Posterior cingulate gyrus (tissue), 11 donors: ENCODE measurements at regions of chr2 and their contacts with region 1.

Region 1: DNA sequence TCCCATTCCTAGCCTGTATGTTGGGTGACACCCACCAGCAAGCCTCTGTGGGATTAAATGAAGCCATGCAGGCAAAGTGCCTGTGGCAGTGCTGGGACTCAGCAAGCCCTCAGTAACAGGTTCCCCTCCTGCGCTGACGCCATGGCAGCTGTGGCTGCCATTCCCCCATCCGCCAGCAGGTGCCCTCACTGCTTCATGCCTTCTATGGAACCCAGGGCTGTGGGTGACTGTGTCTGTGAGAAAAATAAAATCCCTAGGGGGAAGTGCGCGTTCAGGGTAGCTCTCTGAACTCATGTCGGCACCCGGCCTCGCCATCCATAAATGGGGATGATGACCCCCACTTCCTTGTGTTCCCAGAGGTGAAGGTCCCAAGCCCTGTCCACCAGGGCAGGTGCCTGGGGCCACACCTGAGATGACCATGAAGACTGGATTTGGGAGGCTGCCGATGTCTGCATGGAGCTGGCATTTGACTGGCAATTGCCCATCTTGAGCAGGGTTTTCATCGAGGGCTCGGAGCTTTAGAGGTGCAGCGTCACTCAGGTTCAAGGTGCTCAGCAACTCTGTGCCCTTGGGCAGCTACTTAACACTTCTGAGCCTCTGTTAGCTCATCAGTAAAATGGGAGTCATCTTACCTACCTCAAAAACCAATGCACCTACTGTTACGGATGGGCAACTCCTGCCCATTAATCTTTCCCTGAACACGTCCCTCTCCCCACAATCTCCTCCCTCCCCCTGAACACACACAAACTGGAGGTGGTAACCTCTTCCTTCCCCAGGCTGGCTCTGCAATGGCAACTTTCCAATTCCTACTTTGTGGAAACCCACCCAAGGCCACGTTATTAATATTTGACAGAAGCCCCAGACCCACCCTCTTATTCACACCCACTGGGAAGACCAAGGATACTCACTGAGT is 2.9 kb upstream of the MAL start:
- DNase-seq: peak; percentile 81 to 97 (median 88)

Region 2: DNA sequence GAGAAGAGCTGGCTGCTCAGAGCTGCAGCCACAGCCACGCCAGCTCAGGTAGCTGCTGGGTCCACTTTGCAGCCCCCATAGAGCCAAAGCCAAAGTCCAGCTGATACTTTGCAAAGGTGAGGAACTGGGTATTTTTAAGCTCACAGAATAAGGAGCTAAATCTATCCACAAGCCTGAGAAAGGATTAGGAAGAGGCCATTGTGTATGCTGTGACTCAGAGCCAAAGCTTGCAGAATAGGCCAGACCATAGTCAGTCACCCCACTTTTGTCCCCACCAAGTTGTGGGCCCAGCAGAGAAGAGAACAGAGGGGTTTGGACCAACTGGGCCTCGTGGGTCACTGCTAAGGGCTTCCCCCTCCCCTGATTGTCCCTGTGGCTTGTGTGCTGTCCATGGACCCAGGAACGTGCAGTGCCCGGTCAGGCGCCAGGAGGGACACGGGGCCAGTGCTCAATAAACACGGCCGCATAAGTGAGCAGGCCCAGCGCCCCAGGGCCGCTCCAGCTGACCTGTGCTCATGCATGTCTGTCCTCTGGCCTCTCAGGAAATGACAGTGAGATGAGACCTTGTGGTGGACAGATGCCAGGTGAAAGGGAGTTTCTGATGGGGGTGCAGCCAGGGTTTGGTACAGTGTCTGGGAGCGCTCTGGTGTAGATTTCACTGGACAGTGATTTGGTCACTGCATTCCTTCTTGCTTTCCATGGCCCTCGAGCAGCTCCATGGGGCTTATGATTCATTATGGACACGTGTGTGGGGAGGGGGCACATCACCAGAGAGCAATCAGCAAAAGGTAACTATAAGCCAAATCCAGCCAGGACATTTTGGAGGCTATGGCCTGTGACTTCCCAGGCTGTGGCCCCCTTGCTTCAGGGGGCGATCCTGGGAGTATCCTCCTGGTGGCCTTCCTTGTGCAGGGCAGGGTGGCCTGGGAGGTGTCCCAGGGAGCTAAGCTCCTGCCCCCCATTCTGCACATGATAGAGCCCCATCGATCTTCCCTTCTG is 34.2 kb after region 1 on chr2:
- intact Hi-C with region 1: loop called (anchors 5 kb)
- DNase-seq: peak in 6 of 10 donors; percentile 52 to 91 (median 74)

Region 3: GRCh38 chr2:95076784-95077529 is 54.4 kb after region 1 on chr2:
- intact Hi-C with region 1: loop called (anchors 1 kb)
- DNase-seq: peak; percentile 75 to 98 (median 88)